GM12878 (cell line): ENCODE measurements at regions of chr4 and their contacts with region 1.

Region 1: DNA sequence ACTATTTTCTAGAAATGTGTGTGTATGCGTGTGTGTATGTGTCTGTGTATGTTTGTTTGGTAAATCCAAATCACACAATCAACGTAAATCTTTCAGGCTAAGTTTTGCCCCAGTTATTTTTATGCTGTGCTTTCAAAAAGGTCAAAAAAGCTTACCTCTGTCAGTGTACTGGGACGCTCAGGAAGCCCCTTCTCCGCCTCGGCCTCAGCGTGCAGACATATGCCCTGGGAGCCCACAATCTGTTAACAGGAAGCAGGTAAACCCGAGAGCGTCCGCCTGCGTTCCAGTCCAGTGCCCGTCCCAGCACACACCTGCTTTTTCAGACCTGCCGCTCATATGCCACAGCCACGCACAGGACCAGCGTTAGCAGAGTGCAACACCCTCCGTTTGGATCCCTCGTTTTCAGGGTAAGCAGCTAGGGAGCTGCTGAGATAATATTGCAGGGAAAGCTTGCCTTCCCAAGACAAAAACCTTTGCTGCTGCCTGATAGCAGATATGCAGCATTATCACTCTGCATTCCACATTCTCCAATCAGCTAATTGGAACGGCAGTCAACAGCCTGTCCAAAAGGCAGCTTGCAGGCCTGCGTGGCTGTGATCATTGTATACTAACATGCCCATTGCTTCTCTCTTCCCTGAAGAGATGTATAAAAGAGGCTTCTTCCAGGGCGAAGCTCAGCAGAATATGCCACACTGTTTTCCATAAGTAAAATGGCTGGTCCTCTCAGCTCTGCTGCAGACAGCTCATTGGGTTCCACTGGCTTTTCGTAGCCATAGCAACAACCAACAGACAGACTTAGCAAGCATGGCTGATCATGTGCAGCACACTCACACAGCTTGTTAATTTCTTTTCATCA is at the start of gene SORBS2:
- DNase-seq: peak; percentile 56
- ATAC-seq: peak; percentile 93
- H3K4me3 ChIP-seq: peak within 1 kb of the TSS; percentile 65
- H3K27ac ChIP-seq: peak within 1 kb of the TSS; percentile 14
- H3K4me1 ChIP-seq: peaks cover 6% of the 10 kb centered on the region
- H3K27me3 ChIP-seq: no peaks in the 10 kb centered on the region; a peak in 1 of 4 replicates
- CTCF ChIP-seq: no peak
- EP300 ChIP-seq: no peak
- POLR2A ChIP-seq: no peak
- RAD21 ChIP-seq: no peak
- polyA plus RNA-seq, gene SORBS2: 0.06 to 0.51 TPM

Region 2: DNA sequence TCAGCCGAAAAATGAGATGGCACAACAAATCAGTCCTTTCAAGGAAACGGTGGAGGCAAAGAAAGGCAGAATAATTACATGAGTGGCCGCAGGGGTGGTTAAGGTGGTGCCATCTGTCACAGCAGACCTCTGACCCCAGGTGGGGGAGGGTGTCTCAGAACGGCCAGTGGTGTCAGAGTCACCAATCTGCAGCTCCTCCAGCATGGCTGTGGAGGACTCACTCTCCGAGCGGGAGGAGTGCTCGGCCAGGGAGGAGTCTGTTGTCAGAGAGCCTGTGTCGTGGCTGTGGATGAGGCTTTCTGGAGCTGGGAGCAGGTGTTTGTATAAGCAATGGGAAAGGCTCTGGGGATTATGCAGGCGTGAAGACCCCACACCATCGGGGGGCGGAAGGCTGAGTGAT is 146.1 kb before region 1 on chr4:
- CTCF ChIA-PET with region 1: no interaction called
- POLR2A ChIA-PET with region 1: no interaction called
- RAD21 ChIA-PET with region 1: no interaction called
- SMC1A ChIA-PET with region 1: no interaction called
- in situ Hi-C with region 1: no loop called
- intact Hi-C with region 1: no loop called
- DNase-seq: no peak
- ATAC-seq: no peak
- H3K4me3 ChIP-seq: no peak overlapping the region
- H3K27ac ChIP-seq: no peak overlapping the region
- H3K4me1 ChIP-seq: no peaks in the 10 kb centered on the region
- H3K27me3 ChIP-seq: no peaks in the 10 kb centered on the region
- CTCF ChIP-seq: no peak
- EP300 ChIP-seq: no peak
- POLR2A ChIP-seq: no peak
- RAD21 ChIP-seq: no peak

Region 3: DNA sequence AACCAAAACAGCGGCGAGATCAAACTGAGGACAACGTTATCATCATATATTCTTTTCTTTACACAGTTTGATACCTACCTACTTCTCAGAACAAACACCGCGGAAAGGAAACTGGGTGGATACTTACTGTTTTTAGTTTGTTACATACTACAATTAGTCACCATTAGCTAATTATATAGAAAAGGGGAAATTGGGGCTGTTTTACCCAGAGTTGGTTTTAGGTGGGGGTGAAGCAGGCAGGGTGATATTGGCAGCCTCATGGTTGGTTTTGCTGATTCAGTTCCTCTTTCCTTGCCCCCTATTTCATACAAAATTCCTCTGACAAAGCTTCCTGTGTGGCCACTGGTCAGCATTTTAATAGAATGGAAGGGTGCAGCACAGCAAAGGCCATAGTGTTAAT is 77.5 kb before region 1 on chr4:
- CTCF ChIA-PET with region 1: interaction called, 3 read pairs
- POLR2A ChIA-PET with region 1: no interaction called
- RAD21 ChIA-PET with region 1: no interaction called
- SMC1A ChIA-PET with region 1: no interaction called
- in situ Hi-C with region 1: no loop called
- intact Hi-C with region 1: loop called (anchors 2 kb)
- DNase-seq: peak; percentile 79
- ATAC-seq: peak; percentile 83
- H3K4me3 ChIP-seq: peak overlapping the region; percentile 47; the same call in 1 of the 2 replicates
- H3K27ac ChIP-seq: peak overlapping the region; percentile 54; the same call in 1 of the 2 replicates
- H3K4me1 ChIP-seq: peaks cover 38% of the 10 kb centered on the region
- H3K27me3 ChIP-seq: no peaks in the 10 kb centered on the region
- CTCF ChIP-seq: no peak
- EP300 ChIP-seq: peak in 1 of 2 experiments; percentile 32; a peak in 1 of 4 replicates
- POLR2A ChIP-seq: no peak
- RAD21 ChIP-seq: no peak

Region 4: GRCh38 chr4:186137196-186137794 is 325.6 kb after region 1 on chr4:
- CTCF ChIA-PET with region 1: no interaction called
- POLR2A ChIA-PET with region 1: no interaction called
- RAD21 ChIA-PET with region 1: no interaction called
- SMC1A ChIA-PET with region 1: no interaction called
- in situ Hi-C with region 1: no loop called
- intact Hi-C with region 1: no loop called
- DNase-seq: no peak
- ATAC-seq: peak; percentile 54
- H3K4me3 ChIP-seq: no peak overlapping the region
- H3K27ac ChIP-seq: no peak overlapping the region
- H3K4me1 ChIP-seq: peaks cover 15% of the 10 kb centered on the region
- H3K27me3 ChIP-seq: no peaks in the 10 kb centered on the region
- CTCF ChIP-seq: peak; percentile 45 to 68 (median 66); a peak in 5 of 6 replicates
- EP300 ChIP-seq: no peak
- POLR2A ChIP-seq: no peak
- RAD21 ChIP-seq: peak; percentile 74